PC-9 (cell line): ENCODE measurements at regions of chr5 and their contacts with region 1.

Region 1: GRCh38 chr5:156477196-156477595 is 150.2 kb downstream of the SGCD start:
- DNase-seq: no peak
- H3K4me3 ChIP-seq: no peak overlapping the region
- H3K27ac ChIP-seq: no peak overlapping the region
- H3K4me1 ChIP-seq: no peaks in the 10 kb centered on the region
- H3K27me3 ChIP-seq: no peaks in the 10 kb centered on the region
- CTCF ChIP-seq: no peak

Region 2: DNA sequence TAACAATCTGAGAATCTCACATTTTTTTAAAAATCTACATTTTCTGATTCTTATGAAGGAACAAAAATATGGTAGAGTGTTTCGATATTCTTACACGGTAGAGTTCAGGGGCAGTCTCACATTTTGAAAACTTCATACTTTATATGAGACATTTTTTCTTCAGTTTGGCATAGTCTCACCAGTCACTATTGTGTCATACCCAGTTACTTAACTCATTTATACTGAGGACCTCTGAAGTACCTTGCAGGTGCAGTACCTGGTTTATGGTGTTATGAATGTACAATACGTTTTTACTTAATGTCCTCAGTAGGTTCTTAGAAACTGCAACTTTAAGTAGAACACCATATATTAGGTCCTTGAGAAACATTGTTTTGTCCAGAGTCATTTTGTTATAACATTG is 46.4 kb after region 1 on chr5:
- CTCF ChIA-PET with region 1: no interaction called
- POLR2A ChIA-PET with region 1: no interaction called
- intact Hi-C with region 1: loop called (anchors 1 kb)
- DNase-seq: no peak
- H3K4me3 ChIP-seq: no peak overlapping the region
- H3K27ac ChIP-seq: no peak overlapping the region
- H3K4me1 ChIP-seq: no peaks in the 10 kb centered on the region
- H3K27me3 ChIP-seq: no peaks in the 10 kb centered on the region
- CTCF ChIP-seq: no peak

Region 3: GRCh38 chr5:156584528-156585270 is 107.5 kb after region 1 on chr5:
- CTCF ChIA-PET with region 1: no interaction called
- POLR2A ChIA-PET with region 1: no interaction called
- intact Hi-C with region 1: no loop called
- DNase-seq: no peak
- H3K4me3 ChIP-seq: no peak overlapping the region
- H3K27ac ChIP-seq: no peak overlapping the region
- H3K4me1 ChIP-seq: no peaks in the 10 kb centered on the region
- H3K27me3 ChIP-seq: no peaks in the 10 kb centered on the region
- CTCF ChIP-seq: no peak